CD14-positive monocyte (primary cell): ENCODE measurements at regions of chr4 and their contacts with region 1.

Region 1: GRCh38 chr4:165327211-165328100 is at the start of gene MSMO1:
- DNase-seq: peak; percentile 97 to 98 (median 98)
- H3K4me3 ChIP-seq: peak within 1 kb of the TSS; percentile 87 to 99 (median 90)
- H3K4me3 Mint-ChIP-seq: no peak within 1 kb of the TSS
- H3K27ac ChIP-seq: peak within 1 kb of the TSS; percentile 60 to 86
- H3K27ac Mint-ChIP-seq: peak within 1 kb of the TSS in 1 of 7 donors; percentile 48
- H3K4me1 ChIP-seq: peaks cover 24 to 27% of the 10 kb centered on the region in 2 donors
- H3K4me1 Mint-ChIP-seq: peaks cover 30% of the 10 kb centered on the region
- H3K27me3 ChIP-seq: no peaks in the 10 kb centered on the region
- H3K27me3 Mint-ChIP-seq: no peaks in the 10 kb centered on the region
- CTCF ChIP-seq: no peak
- polyA plus RNA-seq, gene MSMO1: 3.1 to 7.6 (median 6.0) TPM

Region 2: DNA sequence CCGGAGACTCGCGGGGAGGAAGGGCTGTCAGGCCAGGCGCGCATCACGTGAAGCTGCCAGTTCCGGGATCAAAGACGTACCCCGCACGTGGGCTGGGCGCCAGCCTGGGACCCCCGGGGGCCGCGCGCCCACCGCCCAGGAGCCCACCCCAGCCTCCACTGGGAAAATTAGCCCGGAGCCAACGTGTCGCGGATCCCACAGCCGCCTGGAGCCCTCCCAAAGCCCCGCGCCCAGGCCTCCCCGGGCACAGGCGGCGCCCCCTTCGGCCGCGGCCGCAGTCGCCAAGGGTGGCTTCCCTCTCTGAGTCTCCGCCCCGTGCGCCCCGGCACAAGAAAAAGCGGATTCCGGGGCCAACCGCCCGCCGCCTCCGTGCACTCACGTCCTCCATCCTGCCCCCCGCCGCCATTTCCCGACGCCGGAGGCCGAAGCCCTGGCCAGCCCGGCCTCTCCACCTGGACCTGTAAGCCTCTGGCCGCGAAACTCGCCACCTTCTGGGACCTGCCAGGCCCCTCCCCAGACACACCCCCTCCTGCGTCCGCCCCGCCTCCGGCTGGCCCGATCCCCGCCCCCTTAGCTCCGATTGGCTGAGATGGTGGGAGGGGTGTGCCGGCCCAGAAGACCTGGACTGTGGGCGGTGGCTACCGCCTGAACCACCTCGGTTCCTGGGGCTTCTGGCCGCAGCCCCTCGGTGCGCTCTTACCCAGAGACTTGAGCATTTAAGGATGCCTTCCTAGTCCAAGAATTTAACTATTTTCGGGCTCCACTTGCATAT is 214.9 kb before region 1 on chr4 and contains the start of gene TMEM192:
- intact Hi-C with region 1: loop called in 1 of 2 experiments (anchors 5 kb)
- DNase-seq: peak; percentile 74 to 85 (median 82)
- H3K4me3 ChIP-seq: peak within 1 kb of the TSS; percentile 74 to 96 (median 82)
- H3K4me3 Mint-ChIP-seq: peak within 1 kb of the TSS; percentile 93 to 98
- H3K27ac ChIP-seq: peak within 1 kb of the TSS; percentile 69 to 90
- H3K27ac Mint-ChIP-seq: peak within 1 kb of the TSS; percentile 88 to 98 (median 96)
- H3K4me1 ChIP-seq: peaks cover 10 to 18% of the 10 kb centered on the region in 2 donors
- H3K4me1 Mint-ChIP-seq: peaks cover 16% of the 10 kb centered on the region
- H3K27me3 ChIP-seq: no peaks in the 10 kb centered on the region
- H3K27me3 Mint-ChIP-seq: peaks cover 0 to 4% (median 0%) of the 10 kb centered on the region in 3 donors
- CTCF ChIP-seq: no peak
- polyA plus RNA-seq, gene TMEM192: 7.3 to 22.4 (median 15.5) TPM

Region 3: GRCh38 chr4:165131247-165131832 is 196.1 kb before region 1 on chr4:
- intact Hi-C with region 1: loop called in 1 of 2 experiments (anchors 5 kb)
- DNase-seq: peak; percentile 53 to 74 (median 60)
- H3K4me3 ChIP-seq: no peak overlapping the region
- H3K4me3 Mint-ChIP-seq: no peak overlapping the region
- H3K27ac ChIP-seq: no peak overlapping the region
- H3K27ac Mint-ChIP-seq: peak overlapping the region in 5 of 7 donors; percentile 26 to 64 (median 30)
- H3K4me1 ChIP-seq: peaks cover 30 to 40% of the 10 kb centered on the region in 2 donors
- H3K4me1 Mint-ChIP-seq: peaks cover 37% of the 10 kb centered on the region
- H3K27me3 ChIP-seq: no peaks in the 10 kb centered on the region
- H3K27me3 Mint-ChIP-seq: peaks cover 1 to 4% (median 2%) of the 10 kb centered on the region in 3 donors
- CTCF ChIP-seq: peak; percentile 93

Region 4: GRCh38 chr4:165294907-165295306 is 32.5 kb before region 1 on chr4:
- intact Hi-C with region 1: loop called in 1 of 2 experiments (anchors 5 kb)
- DNase-seq: peak in 2 of 3 donors; percentile 19 to 50
- H3K4me3 ChIP-seq: peak overlapping the region; percentile 12 to 69 (median 35)
- H3K4me3 Mint-ChIP-seq: peak overlapping the region; percentile 72 to 91
- H3K27ac ChIP-seq: peak overlapping the region; percentile 76 to 89
- H3K27ac Mint-ChIP-seq: peak overlapping the region; percentile 85 to 95 (median 94)
- H3K4me1 ChIP-seq: peaks cover 40 to 42% of the 10 kb centered on the region in 2 donors
- H3K4me1 Mint-ChIP-seq: peaks cover 50% of the 10 kb centered on the region
- H3K27me3 ChIP-seq: no peaks in the 10 kb centered on the region
- H3K27me3 Mint-ChIP-seq: no peaks in the 10 kb centered on the region
- CTCF ChIP-seq: no peak

Region 5: DNA sequence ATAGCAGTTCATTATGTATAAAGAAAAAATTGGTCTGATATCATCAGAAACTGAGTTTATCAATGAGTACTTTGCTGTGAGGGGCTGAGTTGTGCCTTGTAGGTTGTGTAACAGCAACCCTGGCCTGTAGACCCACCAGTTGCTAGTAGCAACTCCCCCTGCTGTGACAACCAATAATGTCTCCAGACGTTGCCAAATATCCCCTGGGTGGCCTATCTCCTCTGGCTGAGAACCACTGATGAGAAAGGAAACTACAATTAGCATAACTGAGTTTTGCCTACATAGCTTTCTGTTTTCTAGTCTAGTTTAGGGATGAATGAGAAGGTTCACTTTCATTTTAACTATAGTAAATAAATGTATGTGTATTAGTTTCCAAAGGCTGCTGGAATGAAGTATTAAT is 285.5 kb after region 1 on chr4:
- intact Hi-C with region 1: no loop called
- DNase-seq: no peak
- H3K4me3 ChIP-seq: no peak overlapping the region
- H3K4me3 Mint-ChIP-seq: no peak overlapping the region
- H3K27ac ChIP-seq: no peak overlapping the region
- H3K27ac Mint-ChIP-seq: no peak overlapping the region
- H3K4me1 ChIP-seq: no peaks in the 10 kb centered on the region
- H3K4me1 Mint-ChIP-seq: peaks cover 8% of the 10 kb centered on the region
- H3K27me3 ChIP-seq: no peaks in the 10 kb centered on the region
- H3K27me3 Mint-ChIP-seq: no peaks in the 10 kb centered on the region
- CTCF ChIP-seq: no peak